Activated CD4-positive, alpha-beta memory T cell treated with anti-CD3 and anti-CD28 coated beads for 36 hours (primary cell): ENCODE measurements at regions of chr16 and their contacts with region 1.

Region 1: GRCh38 chr16:17369421-17370222 is 101.1 kb downstream of the XYLT1 start:
- DNase-seq: peak; percentile 76
- H3K4me3 Mint-ChIP-seq: peak overlapping the region; percentile 87
- H3K27ac Mint-ChIP-seq: peak overlapping the region; percentile 96
- H3K4me1 Mint-ChIP-seq: peaks cover 86% of the 10 kb centered on the region
- H3K27me3 Mint-ChIP-seq: no peaks in the 10 kb centered on the region

Region 2: DNA sequence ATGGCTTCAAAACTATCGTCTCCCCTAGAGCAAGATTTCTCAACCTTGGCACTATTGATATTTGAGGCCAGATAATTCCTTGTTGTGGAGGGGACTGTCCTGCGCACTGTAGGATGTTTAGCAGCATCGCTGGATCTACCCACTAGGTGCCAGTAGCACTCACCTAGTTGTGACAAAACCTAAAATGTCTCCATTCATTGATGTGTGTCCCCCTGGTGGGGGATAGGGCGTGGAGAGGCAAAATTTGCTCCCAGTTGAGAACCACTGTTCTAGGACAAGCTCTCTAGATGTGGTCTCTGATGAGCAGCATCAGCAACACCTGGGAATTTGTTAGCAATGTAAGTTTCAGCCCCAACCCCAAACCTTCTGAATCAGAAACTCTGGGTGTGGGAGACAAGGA is 157.8 kb before region 1 on chr16:
- CTCF ChIA-PET with region 1: no interaction called
- POLR2A ChIA-PET with region 1: no interaction called
- intact Hi-C with region 1: loop called (anchors 10 kb)
- DNase-seq: peak; percentile 43
- H3K4me3 Mint-ChIP-seq: no peak overlapping the region
- H3K27ac Mint-ChIP-seq: no peak overlapping the region
- H3K4me1 Mint-ChIP-seq: peaks cover 6% of the 10 kb centered on the region
- H3K27me3 Mint-ChIP-seq: no peaks in the 10 kb centered on the region